ENCODE measurements at regions of chr16 and their contacts with region 1.

Region 1: GRCh38 chr16:86734543-86735480 is 156.5 kb downstream of the FOXL1 start:
- DNase-seq: no peak
- ATAC-seq: no peak
- H3K4me3 ChIP-seq: no peak overlapping the region
- H3K27ac ChIP-seq: no peak overlapping the region
- H3K4me1 ChIP-seq: peaks cover 6 to 18% of the 10 kb centered on the region in 2 donors
- H3K27me3 ChIP-seq: peaks cover 0 to 4% (median 0%) of the 10 kb centered on the region in 3 donors
- CTCF ChIP-seq: no peak
- POLR2A ChIP-seq: no peak

Region 2: DNA sequence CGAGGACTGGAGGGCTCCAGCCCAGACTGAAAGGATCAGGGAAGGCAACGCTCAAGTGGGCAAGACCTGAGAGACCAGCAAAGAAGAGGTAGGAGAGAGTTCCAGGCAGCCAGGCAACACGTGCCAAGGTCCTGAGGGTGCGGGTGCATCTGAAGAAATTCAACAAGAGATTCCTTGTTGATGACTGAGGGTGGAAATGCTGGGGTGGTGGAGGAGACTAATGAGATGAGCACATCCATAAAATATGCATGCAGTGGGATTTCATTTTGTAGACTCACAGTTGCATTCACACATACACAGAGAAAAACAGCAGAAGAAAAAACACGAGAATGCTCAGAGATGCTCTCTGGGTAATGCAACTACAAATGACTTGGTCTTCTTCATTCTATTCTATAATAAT is 379.3 kb before region 1 on chr16:
- in situ Hi-C with region 1: no loop called
- intact Hi-C with region 1: no loop called
- DNase-seq: no peak
- ATAC-seq: no peak
- H3K4me3 ChIP-seq: no peak overlapping the region
- H3K27ac ChIP-seq: no peak overlapping the region
- H3K4me1 ChIP-seq: no peaks in the 10 kb centered on the region
- H3K27me3 ChIP-seq: peaks cover 0 to 33% (median 14%) of the 10 kb centered on the region in 3 donors
- CTCF ChIP-seq: no peak
- POLR2A ChIP-seq: no peak

Region 3: GRCh38 chr16:86609115-86609514 is 125.7 kb before region 1 on chr16:
- in situ Hi-C with region 1: no loop called
- intact Hi-C with region 1: loop called (anchors 5 kb)
- DNase-seq: no peak
- ATAC-seq: no peak
- H3K4me3 ChIP-seq: no peak overlapping the region
- H3K27ac ChIP-seq: peak overlapping the region; percentile 72 to 90 (median 80)
- H3K4me1 ChIP-seq: peaks cover 29 to 40% of the 10 kb centered on the region in 2 donors
- H3K27me3 ChIP-seq: no peaks in the 10 kb centered on the region
- CTCF ChIP-seq: no peak
- POLR2A ChIP-seq: no peak